Panc1 (cell line): ENCODE measurements at regions of chr12 and their contacts with region 1.

Region 1: DNA sequence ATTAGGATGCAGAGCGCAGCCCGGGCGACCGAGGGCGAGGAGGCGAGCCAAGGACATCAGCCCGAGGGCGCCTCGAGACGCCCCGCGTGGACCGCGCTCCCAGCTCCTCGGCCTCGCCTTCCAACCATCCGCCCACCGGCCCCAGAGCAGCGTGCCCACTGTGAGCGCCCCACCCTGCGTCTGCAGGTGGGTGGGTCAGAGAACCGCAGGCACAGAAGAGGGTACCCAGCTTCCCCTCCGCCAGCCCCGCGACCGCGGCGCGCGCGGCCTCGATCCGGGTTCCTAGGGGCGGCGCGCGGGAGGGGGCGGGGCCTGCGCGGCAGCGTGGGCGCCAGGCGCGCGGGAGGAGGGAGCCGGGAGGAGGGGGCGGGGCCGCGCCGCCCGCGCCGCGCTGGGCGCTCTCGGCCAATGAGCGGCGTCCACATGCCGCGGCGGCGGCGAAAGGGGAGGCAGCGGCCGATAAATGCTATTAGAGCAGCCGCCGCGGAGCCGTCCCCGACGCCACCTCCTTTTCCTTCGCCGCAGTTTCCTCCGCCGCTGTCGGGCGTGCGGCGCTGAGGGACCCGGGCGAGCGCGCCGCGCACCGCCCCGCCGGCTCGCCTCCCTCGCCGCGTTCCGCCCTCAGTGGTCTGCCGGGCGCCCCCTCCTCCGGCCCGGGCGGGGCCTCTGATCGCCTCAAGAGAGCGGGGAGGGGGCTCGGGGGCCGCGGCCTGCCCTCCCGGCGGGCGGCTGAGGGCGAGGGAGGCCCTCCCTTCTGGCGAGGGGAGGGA is at the start of gene ATP2A2:
- DNase-seq: no peak
- ATAC-seq: peak; percentile 93
- H3K4me3 ChIP-seq: peak within 1 kb of the TSS; percentile 85 to 88
- H3K27ac ChIP-seq: peak within 1 kb of the TSS; percentile 89
- H3K4me1 ChIP-seq: peaks cover 32% of the 10 kb centered on the region
- H3K27me3 ChIP-seq: no peaks in the 10 kb centered on the region
- CTCF ChIP-seq: no peak
- total RNA-seq, gene ATP2A2: 286 TPM

Region 2: DNA sequence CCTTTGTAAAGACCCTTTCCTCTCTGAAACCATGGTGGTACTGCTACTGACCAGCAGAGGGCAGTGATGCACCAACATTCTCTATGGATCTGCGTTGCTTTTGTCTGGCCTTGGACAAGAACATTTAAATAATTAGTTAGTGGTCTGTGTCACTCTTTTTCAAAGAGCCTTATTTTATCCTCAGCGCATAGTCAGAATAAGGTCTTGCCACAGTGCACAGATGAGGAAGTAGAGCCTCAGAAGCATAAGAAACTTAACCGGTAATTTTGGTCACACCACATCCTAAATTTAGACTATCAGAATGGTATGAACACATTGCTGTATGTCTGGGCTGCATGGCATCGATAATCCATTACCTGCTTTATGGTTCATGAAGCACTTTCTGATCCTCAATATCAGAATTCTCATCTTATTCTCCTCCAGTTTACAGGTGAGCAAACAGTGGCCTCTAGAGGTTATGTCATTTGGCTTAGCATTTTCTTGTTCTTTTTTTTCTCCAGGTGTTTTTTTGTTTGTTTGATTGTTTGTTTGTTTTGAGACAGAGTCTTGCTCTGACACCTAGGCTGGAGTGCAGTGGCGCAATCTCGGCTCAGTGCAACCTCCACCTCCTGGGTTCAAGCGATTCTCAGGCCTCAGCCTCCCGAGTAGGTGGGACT is 180.5 kb before region 1 on chr12:
- CTCF ChIA-PET with region 1: interaction called, 13 read pairs
- POLR2A ChIA-PET with region 1: no interaction called
- in situ Hi-C with region 1: no loop called
- intact Hi-C with region 1: loop called (anchors 10 kb)
- DNase-seq: peak; percentile 53
- ATAC-seq: peak; percentile 84
- H3K4me3 ChIP-seq: no peak overlapping the region
- H3K27ac ChIP-seq: no peak overlapping the region
- H3K4me1 ChIP-seq: peaks cover 6% of the 10 kb centered on the region
- H3K27me3 ChIP-seq: no peaks in the 10 kb centered on the region
- CTCF ChIP-seq: peak; percentile 92